ENCODE measurements at regions of chr1 and their contacts with region 1.

Region 1: DNA sequence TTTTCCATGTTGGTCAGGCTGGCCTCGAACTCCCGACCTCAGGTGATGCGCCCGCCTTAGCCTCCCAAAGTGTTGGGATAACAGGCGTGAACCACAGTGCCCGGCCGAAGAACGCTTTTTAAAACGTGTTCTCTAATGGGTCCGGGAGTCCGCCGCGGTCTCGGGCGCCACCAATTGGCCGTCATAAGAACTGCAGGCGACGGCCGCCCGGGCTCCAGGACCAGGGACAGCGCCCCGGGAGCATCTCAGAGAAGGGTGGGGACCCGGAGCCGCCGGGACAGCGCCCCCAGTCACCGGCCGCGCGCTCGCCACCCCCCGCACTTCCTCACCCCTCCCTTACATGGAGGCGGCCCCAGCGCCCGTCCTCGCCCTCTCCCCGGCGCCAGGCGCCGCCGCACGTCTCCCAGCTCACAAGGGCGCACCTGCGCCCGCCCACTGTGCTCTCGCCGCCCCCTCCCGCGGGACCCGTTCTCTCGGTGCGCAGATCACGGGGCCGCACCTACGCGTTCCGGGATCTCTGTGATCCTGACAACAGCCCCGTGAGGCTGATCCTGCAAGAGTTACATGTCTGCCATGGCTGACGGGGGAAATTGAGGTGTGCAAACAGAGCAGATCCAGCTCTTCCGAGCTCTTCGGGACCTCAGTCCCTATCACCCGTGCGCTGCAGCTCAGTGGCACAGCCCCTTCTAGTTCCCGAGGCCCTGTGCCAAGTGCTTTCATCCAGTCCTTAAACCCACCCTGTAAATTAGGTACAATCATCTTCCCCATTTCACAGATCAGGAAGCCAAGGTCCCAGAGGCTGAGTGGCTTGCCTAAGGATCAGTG is 9.8 kb downstream of the RAP1GAP start:
- DNase-seq: peak; percentile 96
- H3K4me3 Mint-ChIP-seq: peak overlapping the region; percentile 72
- H3K27ac Mint-ChIP-seq: no peak overlapping the region
- H3K4me1 Mint-ChIP-seq: peaks cover 8% of the 10 kb centered on the region
- H3K27me3 Mint-ChIP-seq: peaks cover 27% of the 10 kb centered on the region

Region 2: GRCh38 chr1:21508580-21509350 is 150.5 kb before region 1 on chr1:
- intact Hi-C with region 1: loop called (anchors 1 kb)
- DNase-seq: peak; percentile 91
- H3K4me3 Mint-ChIP-seq: peak overlapping the region; percentile 77
- H3K27ac Mint-ChIP-seq: peak overlapping the region; percentile 34
- H3K4me1 Mint-ChIP-seq: peaks cover 5% of the 10 kb centered on the region
- H3K27me3 Mint-ChIP-seq: peaks cover 42% of the 10 kb centered on the region

Region 3: GRCh38 chr1:21594935-21595897 is 64.1 kb before region 1 on chr1:
- intact Hi-C with region 1: loop called (anchors 10 kb)
- DNase-seq: peak; percentile 86
- H3K4me3 Mint-ChIP-seq: no peak overlapping the region
- H3K27ac Mint-ChIP-seq: no peak overlapping the region
- H3K4me1 Mint-ChIP-seq: no peaks in the 10 kb centered on the region
- H3K27me3 Mint-ChIP-seq: peaks cover 4% of the 10 kb centered on the region